ENCODE measurements at regions of chr10 and their contacts with region 1.

Region 1: GRCh38 chr10:92432596-92432995 is 141.3 kb downstream of the IDE start:
- DNase-seq: no peak
- H3K4me3 ChIP-seq: no peak overlapping the region
- H3K27ac ChIP-seq: no peak overlapping the region
- H3K4me1 ChIP-seq: no peaks in the 10 kb centered on the region
- H3K27me3 ChIP-seq: no peaks in the 10 kb centered on the region
- CTCF ChIP-seq: no peak

Region 2: GRCh38 chr10:91768123-91768522 is 664.5 kb before region 1 on chr10:
- CTCF ChIA-PET with region 1: no interaction called
- POLR2A ChIA-PET with region 1: no interaction called
- intact Hi-C with region 1: loop called (anchors 10 kb)
- DNase-seq: no peak
- H3K4me3 ChIP-seq: no peak overlapping the region
- H3K27ac ChIP-seq: no peak overlapping the region
- H3K4me1 ChIP-seq: no peaks in the 10 kb centered on the region
- H3K27me3 ChIP-seq: no peaks in the 10 kb centered on the region
- CTCF ChIP-seq: no peak

Region 3: DNA sequence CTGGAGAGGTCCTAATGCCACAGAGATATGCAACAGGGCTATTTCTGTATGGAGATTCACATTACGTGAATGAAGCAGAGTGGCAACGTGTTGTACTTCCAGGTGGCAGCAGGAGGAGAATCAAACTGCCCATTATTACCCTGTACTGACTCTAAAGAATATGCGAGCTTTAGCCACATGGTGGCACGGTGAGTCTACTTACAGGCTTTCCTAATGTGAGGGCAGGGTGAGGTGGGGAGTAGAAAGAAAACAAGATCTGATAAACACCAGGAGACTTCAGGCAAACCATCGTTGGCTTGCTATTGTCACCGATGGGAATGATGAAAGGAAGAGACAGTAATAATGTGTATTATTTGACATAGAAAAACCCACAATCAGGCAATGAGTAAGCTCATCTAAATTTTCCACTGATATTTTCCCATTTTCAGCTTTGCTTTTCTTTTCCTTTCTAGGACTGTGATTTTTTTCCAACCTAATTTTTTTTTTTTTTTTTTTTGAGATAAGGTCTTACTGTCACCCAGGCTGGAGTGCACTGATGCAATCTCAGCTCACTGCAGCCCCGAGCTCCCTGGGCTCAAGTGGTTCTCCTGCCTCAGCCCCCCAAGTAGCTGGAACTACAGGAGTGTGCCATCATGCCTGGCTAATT is 344.7 kb before region 1 on chr10:
- CTCF ChIA-PET with region 1: interaction called, 3 read pairs
- POLR2A ChIA-PET with region 1: no interaction called
- intact Hi-C with region 1: loop called (anchors 1 kb)
- DNase-seq: peak; percentile 88
- H3K4me3 ChIP-seq: no peak overlapping the region
- H3K27ac ChIP-seq: no peak overlapping the region
- H3K4me1 ChIP-seq: no peaks in the 10 kb centered on the region
- H3K27me3 ChIP-seq: no peaks in the 10 kb centered on the region
- CTCF ChIP-seq: peak; percentile 79

Region 4: DNA sequence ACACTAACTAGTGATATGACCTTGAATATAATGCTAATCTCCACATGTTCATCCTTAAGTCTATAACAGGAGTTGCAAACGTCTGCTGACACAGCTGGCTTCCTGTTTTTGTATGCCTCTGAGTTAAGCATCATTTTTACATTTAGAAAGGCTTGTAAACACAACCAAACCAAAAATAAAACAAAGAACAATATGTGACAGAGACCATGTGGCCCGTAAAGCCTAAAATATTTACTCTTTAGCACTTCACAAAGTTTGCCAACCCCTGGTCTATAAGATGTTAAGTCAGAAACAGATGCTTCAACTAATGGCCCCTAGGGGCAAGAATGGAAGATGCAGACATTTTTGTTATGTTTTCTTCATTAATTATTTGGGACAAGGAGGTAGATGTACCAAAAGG is 251.0 kb before region 1 on chr10:
- CTCF ChIA-PET with region 1: no interaction called
- POLR2A ChIA-PET with region 1: no interaction called
- intact Hi-C with region 1: no loop called
- DNase-seq: peak; percentile 16
- H3K4me3 ChIP-seq: no peak overlapping the region
- H3K27ac ChIP-seq: no peak overlapping the region
- H3K4me1 ChIP-seq: no peaks in the 10 kb centered on the region
- H3K27me3 ChIP-seq: no peaks in the 10 kb centered on the region
- CTCF ChIP-seq: peak; percentile 32; the same call in 1 of the 2 replicates

Region 5: DNA sequence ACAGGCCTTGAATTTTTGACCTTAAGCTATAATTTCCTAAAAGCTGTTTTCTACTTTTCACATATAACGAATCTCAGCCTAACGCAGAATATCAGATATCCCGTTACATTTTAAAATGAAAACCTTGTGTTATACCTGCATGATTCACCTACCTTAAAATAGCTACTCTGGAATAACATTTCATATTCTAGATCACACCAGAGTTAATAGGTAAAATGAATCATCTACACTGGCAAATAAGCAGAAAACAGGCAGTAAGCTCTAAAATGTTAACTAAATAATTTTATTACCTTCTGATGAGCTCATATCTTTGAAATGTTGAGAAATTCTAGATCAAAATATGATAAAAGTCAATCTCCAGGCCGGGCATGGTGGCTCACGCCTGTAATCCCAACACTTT is 213.1 kb before region 1 on chr10:
- CTCF ChIA-PET with region 1: no interaction called
- POLR2A ChIA-PET with region 1: no interaction called
- intact Hi-C with region 1: loop called (anchors 10 kb)
- DNase-seq: no peak
- H3K4me3 ChIP-seq: no peak overlapping the region
- H3K27ac ChIP-seq: no peak overlapping the region
- H3K4me1 ChIP-seq: no peaks in the 10 kb centered on the region
- H3K27me3 ChIP-seq: no peaks in the 10 kb centered on the region
- CTCF ChIP-seq: no peak